Endothelial cell of umbilical vein (primary cell): ENCODE measurements at regions of chr7 and their contacts with region 1.

Region 1: DNA sequence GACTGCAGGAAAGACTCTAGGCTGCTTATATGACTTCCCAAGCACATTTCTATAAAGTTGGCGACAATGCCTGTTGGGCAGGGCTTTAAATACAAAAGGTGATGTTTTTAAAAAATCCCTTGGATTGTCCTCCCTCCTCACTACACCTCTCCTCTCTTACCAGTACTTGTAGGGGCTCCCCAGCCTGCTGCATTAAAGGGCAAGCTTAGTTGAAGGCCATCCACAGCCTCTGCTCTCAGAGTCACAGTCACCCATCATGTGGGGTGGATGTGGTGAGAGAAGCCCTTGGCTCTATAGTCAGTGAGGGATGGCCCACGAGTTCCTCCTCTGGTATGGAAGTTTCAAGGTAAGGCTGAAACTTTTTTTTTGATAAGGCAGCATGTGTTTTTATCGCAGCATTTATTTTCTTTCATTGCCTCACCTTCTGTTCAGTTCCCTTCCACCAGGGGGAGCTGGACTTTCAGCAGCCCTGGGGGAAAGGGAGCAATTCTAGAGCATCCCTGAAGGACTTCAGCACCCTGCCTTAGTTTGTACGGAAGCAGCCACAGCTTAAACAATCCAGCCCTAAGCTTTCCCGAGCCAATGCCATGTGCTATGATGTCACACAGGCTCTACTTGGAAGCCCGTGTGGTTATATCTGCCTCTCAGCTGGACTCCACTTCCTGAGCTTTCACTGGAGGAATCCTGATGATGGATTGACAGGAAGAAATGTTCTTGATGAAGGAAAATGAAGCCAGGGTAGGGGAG is 131.9 kb downstream of the CALCR start:
- DNase-seq: peak; percentile 26
- H3K4me3 ChIP-seq: no peak overlapping the region
- H3K27ac ChIP-seq: no peak overlapping the region
- H3K4me1 ChIP-seq: no peaks in the 10 kb centered on the region
- H3K27me3 ChIP-seq: peaks cover 3 to 4% of the 10 kb centered on the region in 2 experiments
- CTCF ChIP-seq: peak; percentile 63 to 70
- POLR2A ChIP-seq: no peak

Region 2: DNA sequence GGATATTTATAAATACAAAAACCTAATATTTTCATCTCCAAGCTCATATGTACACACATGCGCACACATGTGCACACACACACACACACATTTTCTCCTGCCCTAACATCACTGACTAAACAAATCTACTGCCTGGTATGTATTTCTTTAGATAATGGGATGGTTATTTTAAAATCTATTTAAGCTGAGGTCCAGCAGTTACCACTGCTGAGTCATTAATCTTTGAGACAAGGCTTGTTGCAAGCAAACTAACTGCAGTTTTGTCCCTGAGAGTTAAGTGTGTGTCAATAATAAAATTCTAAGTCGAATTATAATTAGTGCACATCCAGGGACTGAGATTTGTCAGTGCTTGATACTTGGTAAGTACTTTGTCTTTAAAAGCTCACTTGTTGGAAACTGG is 75.4 kb before region 1 on chr7:
- CTCF ChIA-PET with region 1: no interaction called
- POLR2A ChIA-PET with region 1: no interaction called
- dilution Hi-C with region 1: no loop called
- intact Hi-C with region 1: no loop called
- DNase-seq: no peak
- H3K4me3 ChIP-seq: no peak overlapping the region
- H3K27ac ChIP-seq: no peak overlapping the region
- H3K4me1 ChIP-seq: no peaks in the 10 kb centered on the region
- H3K27me3 ChIP-seq: peaks cover 0 to 2% of the 10 kb centered on the region in 2 experiments
- CTCF ChIP-seq: no peak
- POLR2A ChIP-seq: no peak

Region 3: DNA sequence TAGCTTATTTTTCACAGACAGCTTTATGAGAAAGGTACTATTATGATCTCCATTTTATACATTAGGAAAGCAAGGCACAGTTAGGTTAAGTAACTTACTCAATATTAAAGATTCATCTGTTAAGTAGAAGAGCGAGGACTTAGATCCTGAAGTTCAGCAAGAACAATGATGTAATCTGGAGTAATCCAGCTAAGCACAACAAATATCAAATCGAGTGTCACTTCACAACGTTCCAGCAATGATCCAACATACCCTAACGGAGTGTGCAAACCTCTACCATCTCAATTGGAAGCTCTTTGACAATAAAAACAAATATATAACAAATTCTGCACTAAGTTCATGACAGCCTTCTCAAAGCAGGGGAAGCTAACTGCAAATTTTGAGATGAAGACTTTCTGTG is 10.6 kb after region 1 on chr7:
- CTCF ChIA-PET with region 1: interaction called, 14 read pairs
- POLR2A ChIA-PET with region 1: no interaction called
- dilution Hi-C with region 1: no loop called
- intact Hi-C with region 1: no loop called
- DNase-seq: no peak
- H3K4me3 ChIP-seq: no peak overlapping the region
- H3K27ac ChIP-seq: no peak overlapping the region
- H3K4me1 ChIP-seq: no peaks in the 10 kb centered on the region
- H3K27me3 ChIP-seq: peaks cover 7 to 10% of the 10 kb centered on the region in 2 experiments
- CTCF ChIP-seq: no peak
- POLR2A ChIP-seq: no peak

Region 4: DNA sequence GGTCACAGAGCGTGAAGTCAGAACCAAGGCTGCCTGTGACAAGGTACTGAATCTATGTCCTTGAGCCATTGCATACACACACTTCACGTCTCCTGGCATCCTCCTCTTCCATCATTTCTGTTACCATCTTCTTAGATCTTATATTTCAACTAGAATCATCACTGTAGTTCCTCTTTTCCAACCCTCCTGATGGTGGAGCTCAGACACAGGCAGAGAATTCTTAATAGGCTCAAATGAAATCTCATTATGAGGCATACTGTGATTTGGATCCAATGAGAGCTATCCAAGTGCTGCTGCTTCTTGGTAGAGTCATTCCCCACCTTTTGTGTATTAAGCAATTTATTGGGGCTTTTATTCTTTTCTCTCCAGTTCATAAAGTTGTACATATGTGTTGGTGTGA is 18.7 kb after region 1 on chr7:
- CTCF ChIA-PET with region 1: interaction called, 11 read pairs
- POLR2A ChIA-PET with region 1: no interaction called
- dilution Hi-C with region 1: no loop called
- intact Hi-C with region 1: no loop called
- DNase-seq: no peak
- H3K4me3 ChIP-seq: no peak overlapping the region
- H3K27ac ChIP-seq: no peak overlapping the region
- H3K4me1 ChIP-seq: no peaks in the 10 kb centered on the region
- H3K27me3 ChIP-seq: peaks cover 0 to 5% of the 10 kb centered on the region in 2 experiments
- CTCF ChIP-seq: no peak
- POLR2A ChIP-seq: no peak